Activated CD8-positive, alpha-beta T cell treated with anti-CD3 and anti-CD28 coated beads, Interleukin-2, amount 10 ng/mL, durations not matched to agents 7 days and 5 days (primary cell): ENCODE measurements at regions of chr9 and their contacts with region 1.

Region 1: GRCh38 chr9:5886114-5886939 is 4.4 kb upstream of the MLANA start:
- DNase-seq: peak; percentile 89
- ATAC-seq: peak; percentile 96
- H3K4me3 Mint-ChIP-seq: no peak overlapping the region
- H3K27ac Mint-ChIP-seq: peak overlapping the region; percentile 73
- H3K4me1 Mint-ChIP-seq: peaks cover 19% of the 10 kb centered on the region
- H3K27me3 Mint-ChIP-seq: peaks cover 13% of the 10 kb centered on the region

Region 2: DNA sequence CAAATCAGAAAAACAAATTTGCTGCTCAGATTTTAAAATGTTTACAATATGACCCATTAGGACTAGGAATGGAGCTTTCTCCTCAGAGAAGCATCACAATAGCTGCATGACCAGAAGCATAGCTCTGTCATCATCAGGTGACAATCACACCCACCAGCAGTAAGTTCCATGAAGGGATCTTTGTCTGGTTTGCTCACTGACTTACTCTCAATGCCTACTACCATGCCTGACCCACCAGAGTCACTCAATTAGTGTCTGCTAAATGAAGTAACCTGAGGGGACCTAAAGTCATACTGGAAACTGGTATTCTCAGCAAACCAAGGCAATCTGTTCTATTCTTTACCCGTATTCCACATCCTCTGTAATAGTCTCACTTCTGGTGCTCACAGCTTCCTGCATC is 61.1 kb before region 1 on chr9:
- CTCF ChIA-PET with region 1: interaction called, 67 read pairs
- POLR2A ChIA-PET with region 1: no interaction called
- DNase-seq: no peak
- ATAC-seq: peak; percentile 27
- H3K4me3 Mint-ChIP-seq: no peak overlapping the region
- H3K27ac Mint-ChIP-seq: no peak overlapping the region
- H3K4me1 Mint-ChIP-seq: peaks cover 39% of the 10 kb centered on the region
- H3K27me3 Mint-ChIP-seq: no peaks in the 10 kb centered on the region

Region 3: DNA sequence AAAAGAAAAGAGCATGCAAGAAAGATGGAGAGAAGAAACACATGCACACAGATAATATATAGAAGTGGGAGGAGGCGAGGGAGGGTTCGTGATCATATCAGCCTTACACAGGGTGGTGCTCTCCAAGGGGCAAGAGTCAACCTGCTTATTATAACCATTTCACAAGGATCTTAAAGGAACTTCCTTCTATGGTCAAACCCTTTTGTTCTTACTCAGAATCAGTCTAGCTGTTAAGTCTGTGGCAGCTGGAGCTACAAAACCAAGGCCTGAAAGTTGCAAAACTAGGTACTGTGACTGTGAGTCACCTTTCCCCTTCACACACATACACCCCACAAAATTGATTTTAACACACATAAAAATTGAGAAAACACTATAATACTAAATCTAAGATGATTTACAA is 34.9 kb before region 1 on chr9:
- CTCF ChIA-PET with region 1: interaction called, 20 read pairs
- POLR2A ChIA-PET with region 1: interaction called, 3 read pairs
- DNase-seq: peak; percentile 73
- ATAC-seq: peak; percentile 92
- H3K4me3 Mint-ChIP-seq: peak overlapping the region; percentile 37
- H3K27ac Mint-ChIP-seq: peak overlapping the region; percentile 75
- H3K4me1 Mint-ChIP-seq: peaks cover 66% of the 10 kb centered on the region
- H3K27me3 Mint-ChIP-seq: no peaks in the 10 kb centered on the region

Region 4: DNA sequence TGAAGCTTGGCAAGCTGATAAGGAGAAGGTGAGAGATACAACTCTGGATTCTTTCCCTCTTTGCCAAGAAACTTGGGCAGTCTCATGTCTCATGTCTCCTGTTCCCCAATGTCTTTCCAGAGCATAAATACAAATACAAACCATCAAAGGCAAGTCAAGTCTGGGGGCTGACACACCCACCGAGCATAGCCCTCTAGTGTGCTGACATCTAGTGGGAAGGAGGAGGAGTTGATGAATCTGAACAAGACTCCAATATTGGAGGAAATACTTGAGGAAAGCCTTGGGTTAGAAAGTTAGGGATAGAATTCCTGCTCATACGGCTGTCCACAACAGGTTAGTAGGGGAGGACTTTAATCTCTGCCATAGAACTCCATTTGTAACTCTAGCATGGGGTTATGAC is 13.0 kb after region 1 on chr9:
- CTCF ChIA-PET with region 1: interaction called, 44 read pairs
- POLR2A ChIA-PET with region 1: no interaction called
- DNase-seq: no peak
- ATAC-seq: no peak
- H3K4me3 Mint-ChIP-seq: no peak overlapping the region
- H3K27ac Mint-ChIP-seq: no peak overlapping the region
- H3K4me1 Mint-ChIP-seq: no peaks in the 10 kb centered on the region
- H3K27me3 Mint-ChIP-seq: no peaks in the 10 kb centered on the region

Region 5: GRCh38 chr9:5920860-5921328 is 34.6 kb after region 1 on chr9:
- CTCF ChIA-PET with region 1: interaction called, 12 read pairs
- POLR2A ChIA-PET with region 1: no interaction called
- DNase-seq: no peak
- ATAC-seq: no peak
- H3K4me3 Mint-ChIP-seq: no peak overlapping the region
- H3K27ac Mint-ChIP-seq: no peak overlapping the region
- H3K4me1 Mint-ChIP-seq: no peaks in the 10 kb centered on the region
- H3K27me3 Mint-ChIP-seq: no peaks in the 10 kb centered on the region

Region 6: GRCh38 chr9:6008169-6008979 is 122.0 kb after region 1 on chr9:
- CTCF ChIA-PET with region 1: interaction called, 11 read pairs
- POLR2A ChIA-PET with region 1: no interaction called
- DNase-seq: peak; percentile 98
- ATAC-seq: peak; percentile 81
- H3K4me3 Mint-ChIP-seq: peak overlapping the region; percentile 72
- H3K27ac Mint-ChIP-seq: peak overlapping the region; percentile 83
- H3K4me1 Mint-ChIP-seq: peaks cover 63% of the 10 kb centered on the region
- H3K27me3 Mint-ChIP-seq: no peaks in the 10 kb centered on the region

Region 7: GRCh38 chr9:6055213-6055612 is 168.9 kb after region 1 on chr9:
- CTCF ChIA-PET with region 1: interaction called, 99 read pairs
- POLR2A ChIA-PET with region 1: no interaction called
- DNase-seq: peak; percentile 75
- ATAC-seq: peak; percentile 68
- H3K4me3 Mint-ChIP-seq: no peak overlapping the region
- H3K27ac Mint-ChIP-seq: no peak overlapping the region
- H3K4me1 Mint-ChIP-seq: peaks cover 3% of the 10 kb centered on the region
- H3K27me3 Mint-ChIP-seq: peaks cover 16% of the 10 kb centered on the region